ENCODE measurements at regions of chr1 and their contacts with region 1.

Region 1: DNA sequence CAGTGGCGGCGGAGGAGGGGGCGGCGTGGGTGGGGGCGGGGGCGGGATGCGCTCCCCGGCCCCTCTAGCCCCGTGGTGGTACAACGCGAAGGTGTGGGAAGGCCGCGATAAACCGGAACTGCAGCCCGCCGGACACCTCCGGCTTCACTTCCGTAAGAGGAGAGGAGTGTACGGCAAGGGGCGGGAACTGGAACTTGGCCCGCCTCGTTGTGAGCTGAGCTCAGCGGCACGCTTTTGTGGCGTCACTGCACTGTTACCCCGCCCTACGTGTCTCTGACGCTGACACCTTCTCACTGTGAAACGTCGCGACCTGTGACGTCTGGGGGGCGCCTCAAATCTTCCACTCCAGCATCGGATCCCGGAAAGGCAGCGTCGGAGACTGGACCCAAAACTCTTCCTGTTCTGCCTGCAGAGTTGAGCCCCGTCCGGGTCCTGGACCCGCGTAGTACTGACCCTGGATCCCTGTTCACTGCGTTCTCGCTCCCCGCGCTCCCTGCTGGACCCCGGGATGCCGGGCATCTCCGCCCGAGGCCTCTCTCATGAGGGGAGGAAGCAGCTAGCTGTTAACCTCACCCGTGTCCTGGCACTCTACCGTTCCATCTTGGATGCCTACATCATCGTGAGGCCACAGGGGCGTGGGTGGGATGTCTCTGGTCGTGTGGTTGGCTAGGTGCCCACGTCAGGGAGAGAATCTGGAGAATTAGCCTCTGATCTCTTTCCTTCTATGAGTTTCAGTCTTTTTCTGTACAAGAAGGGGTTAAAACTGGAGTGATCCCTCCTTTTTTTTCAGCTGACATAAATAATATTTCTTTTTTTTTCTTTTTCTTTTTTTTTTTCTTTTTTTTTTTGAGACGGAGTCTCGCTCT is at the start of gene ISG20L2:
- DNase-seq: peak; percentile 96
- H3K4me3 ChIP-seq: peak within 1 kb of the TSS; percentile 56 to 94 (median 79)
- H3K27ac ChIP-seq: peak within 1 kb of the TSS; percentile 83
- H3K4me1 ChIP-seq: peaks cover 32% of the 10 kb centered on the region
- H3K27me3 ChIP-seq: no peaks in the 10 kb centered on the region
- CTCF ChIP-seq: no peak
- POLR2A ChIP-seq: peak; percentile 75
- total RNA-seq, gene ISG20L2: 32.1 and 35.3 TPM in 2 replicates

Region 2: GRCh38 chr1:156677616-156678596 is 50.9 kb before region 1 on chr1:
- CTCF ChIA-PET with region 1: interaction called, 123 read pairs
- POLR2A ChIA-PET with region 1: no interaction called
- dilution Hi-C with region 1: no loop called
- intact Hi-C with region 1: no loop called
- DNase-seq: peak; percentile 83
- H3K4me3 ChIP-seq: peak overlapping the region; percentile 19 to 81 (median 50)
- H3K27ac ChIP-seq: peak overlapping the region; percentile 19
- H3K4me1 ChIP-seq: peaks cover 36% of the 10 kb centered on the region
- H3K27me3 ChIP-seq: peaks cover 2 to 5% of the 10 kb centered on the region in 2 experiments
- CTCF ChIP-seq: peak; percentile 91
- POLR2A ChIP-seq: no peak

Region 3: DNA sequence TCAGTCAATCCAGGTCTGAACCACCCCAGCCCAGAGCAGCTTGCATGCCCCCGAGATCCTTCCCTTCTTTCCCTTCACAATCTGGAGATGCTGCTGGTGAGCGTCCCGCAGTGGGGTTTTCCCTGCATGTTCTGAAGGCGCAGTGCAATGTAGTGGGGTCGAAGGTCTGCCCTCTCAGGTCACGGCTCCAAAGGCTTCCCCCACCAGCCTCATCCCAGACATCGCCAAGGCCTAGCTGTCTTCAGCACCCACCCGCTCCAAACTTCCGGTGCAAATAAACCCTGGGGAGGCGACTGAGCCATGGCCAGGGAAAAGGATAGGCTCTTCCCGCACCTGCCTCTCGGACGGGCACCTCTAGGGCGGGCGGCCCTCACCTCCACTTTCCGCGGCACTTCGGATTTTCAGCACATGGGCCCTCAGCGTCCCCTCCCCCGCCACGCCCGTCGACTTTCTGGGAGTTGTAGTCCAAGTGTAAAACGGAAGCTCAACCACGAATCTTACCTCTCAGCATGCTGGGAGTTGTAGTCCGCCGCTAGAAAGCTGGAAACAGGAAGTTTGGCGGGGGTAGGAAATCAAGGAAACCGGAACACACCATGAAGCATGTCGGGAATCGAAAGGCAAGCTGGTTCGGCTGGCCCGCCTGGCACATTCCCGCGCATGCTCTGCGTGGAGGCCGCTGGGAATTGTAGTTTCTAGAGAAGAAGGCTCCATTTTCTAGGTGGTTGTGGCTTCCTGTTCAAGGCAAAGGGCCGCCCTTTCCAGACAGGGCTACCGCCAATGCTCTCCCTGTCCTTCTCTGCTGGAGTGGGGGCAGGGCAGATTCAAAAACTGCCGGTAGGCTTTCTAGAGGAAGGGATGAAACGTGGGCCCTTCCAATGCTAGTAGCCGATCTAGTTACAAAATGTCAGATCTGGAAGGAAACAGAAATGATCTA is 12.1 kb after region 1 on chr1 and contains the start of gene MRPL24:
- CTCF ChIA-PET with region 1: interaction called, 52 read pairs
- POLR2A ChIA-PET with region 1: interaction called, 15 read pairs
- dilution Hi-C with region 1: no loop called
- intact Hi-C with region 1: loop called (anchors 1 kb)
- DNase-seq: peak; percentile 99
- H3K4me3 ChIP-seq: peak within 1 kb of the TSS; percentile 59 to 67 (median 61)
- H3K27ac ChIP-seq: peak within 1 kb of the TSS; percentile 22
- H3K4me1 ChIP-seq: peaks cover 14% of the 10 kb centered on the region
- H3K27me3 ChIP-seq: no peaks in the 10 kb centered on the region
- CTCF ChIP-seq: no peak
- POLR2A ChIP-seq: peak; percentile 69
- total RNA-seq, gene MRPL24: 63.3 and 77.7 TPM in 2 replicates

Region 4: DNA sequence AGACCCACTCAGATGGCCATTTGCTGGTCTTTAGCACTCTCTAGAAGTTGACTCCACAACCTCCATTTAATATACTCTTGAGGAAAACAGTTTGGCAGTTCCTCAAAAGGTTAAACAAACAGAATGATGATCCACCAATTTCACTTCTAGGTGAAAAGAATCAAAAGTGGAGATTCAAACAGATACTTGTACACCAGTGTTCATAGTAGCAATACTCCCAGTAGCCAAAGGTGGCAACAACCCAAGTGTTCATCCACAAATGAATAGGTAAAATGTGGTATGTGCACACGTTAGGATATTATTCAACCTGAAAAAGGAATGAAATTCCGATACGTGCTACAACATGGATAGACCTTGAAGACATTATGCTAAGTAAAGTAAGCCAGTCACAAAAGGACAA is 44.8 kb after region 1 on chr1:
- CTCF ChIA-PET with region 1: interaction called, 52 read pairs
- POLR2A ChIA-PET with region 1: interaction called, 3 read pairs
- dilution Hi-C with region 1: no loop called
- intact Hi-C with region 1: no loop called
- DNase-seq: no peak
- H3K4me3 ChIP-seq: no peak overlapping the region
- H3K27ac ChIP-seq: no peak overlapping the region
- H3K4me1 ChIP-seq: peaks cover 10% of the 10 kb centered on the region
- H3K27me3 ChIP-seq: no peaks in the 10 kb centered on the region
- CTCF ChIP-seq: peak in 1 of 2 donors; percentile 6
- POLR2A ChIP-seq: no peak

Region 5: GRCh38 chr1:156860113-156860627 is 131.3 kb after region 1 on chr1:
- CTCF ChIA-PET with region 1: interaction called, 336 read pairs
- POLR2A ChIA-PET with region 1: interaction called, 3 read pairs
- dilution Hi-C with region 1: no loop called
- intact Hi-C with region 1: loop called (anchors 1 kb)
- DNase-seq: peak; percentile 40
- H3K4me3 ChIP-seq: peak overlapping the region in 2 of 3 experiments; percentile 1 to 30
- H3K27ac ChIP-seq: no peak overlapping the region
- H3K4me1 ChIP-seq: peaks cover 17% of the 10 kb centered on the region
- H3K27me3 ChIP-seq: peaks cover 39 to 40% of the 10 kb centered on the region in 2 experiments
- CTCF ChIP-seq: peak; percentile 79 to 90
- POLR2A ChIP-seq: no peak

Region 6: GRCh38 chr1:156993446-156994147 is 264.8 kb after region 1 on chr1:
- CTCF ChIA-PET with region 1: no interaction called
- POLR2A ChIA-PET with region 1: no interaction called
- dilution Hi-C with region 1: no loop called
- intact Hi-C with region 1: no loop called
- DNase-seq: no peak
- H3K4me3 ChIP-seq: no peak overlapping the region
- H3K27ac ChIP-seq: no peak overlapping the region
- H3K4me1 ChIP-seq: no peaks in the 10 kb centered on the region
- H3K27me3 ChIP-seq: no peaks in the 10 kb centered on the region
- CTCF ChIP-seq: no peak
- POLR2A ChIP-seq: no peak